Cardiac septum (tissue), 1 donor: ENCODE measurements at regions of chr18 and their contacts with region 1.

Region 1: DNA sequence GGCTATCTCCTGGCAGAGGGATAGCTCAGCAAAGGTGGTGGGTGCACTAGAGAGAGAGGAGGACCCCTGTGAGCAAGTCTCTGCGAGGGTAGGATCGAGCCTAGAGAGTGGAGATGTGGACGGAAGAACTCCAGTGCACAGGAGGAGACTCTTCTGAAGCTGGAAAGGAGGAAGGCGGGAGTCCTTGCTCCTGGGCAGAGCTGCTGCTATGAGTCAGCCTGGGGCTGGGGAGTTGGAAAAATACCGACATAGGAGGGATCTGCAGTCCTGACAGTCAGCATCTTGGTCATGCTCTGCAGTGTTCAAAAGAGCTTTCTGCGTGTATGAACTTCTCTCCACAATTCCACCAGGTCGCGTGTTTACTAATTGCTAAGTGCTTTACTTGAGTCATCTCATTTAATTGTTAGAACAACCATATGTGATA is 233.8 kb downstream of the LDLRAD4 start:
- DNase-seq: peak; percentile 69

Region 2: DNA sequence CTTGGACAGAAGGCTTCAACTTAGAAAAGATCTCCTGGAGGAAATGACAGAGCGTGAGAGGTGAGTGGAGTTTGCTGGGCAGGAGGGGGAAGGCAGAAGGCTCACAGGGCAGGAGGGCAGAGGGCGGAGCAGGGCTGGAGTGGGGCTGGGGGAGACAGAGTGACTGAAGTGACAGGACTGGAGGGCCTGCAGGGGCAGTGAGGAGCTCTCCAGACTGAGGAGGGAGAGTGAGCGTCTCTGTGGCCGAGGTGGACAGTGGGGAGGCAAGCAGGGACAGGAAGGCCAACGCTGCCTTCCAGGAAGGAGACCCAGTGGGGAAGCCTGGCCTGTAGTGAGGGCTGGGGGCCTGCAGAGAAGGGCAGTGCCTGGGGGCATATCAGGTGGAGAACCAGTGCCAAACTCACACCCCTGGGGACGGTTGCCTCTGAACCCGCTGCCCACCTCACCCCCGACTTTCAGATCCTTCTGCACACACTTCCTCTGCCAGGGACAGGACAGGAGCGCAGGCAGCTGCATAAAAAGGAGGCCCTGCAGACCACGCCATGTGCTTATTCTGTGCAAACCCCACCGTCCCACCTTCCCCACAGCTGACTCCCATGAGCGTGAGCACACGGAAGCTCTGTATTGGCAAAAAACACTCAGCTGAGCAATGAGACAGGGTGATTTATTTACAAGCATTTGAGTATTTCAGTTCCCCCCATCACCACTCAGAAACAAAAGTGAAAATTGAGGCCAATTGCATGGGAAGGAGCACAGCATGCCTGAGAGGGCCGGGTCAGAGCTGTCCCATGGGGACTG is 29.6 kb after region 1 on chr18:
- intact Hi-C with region 1: no loop called
- DNase-seq: no peak

Region 3: GRCh38 chr18:13500227-13500865 is 47.9 kb after region 1 on chr18:
- intact Hi-C with region 1: loop called (anchors 5 kb)
- DNase-seq: no peak